ENCODE measurements at regions of chr4 and their contacts with region 1.

Region 1: GRCh38 chr4:125961626-125962025 is 646.9 kb downstream of the FAT4 start:
- DNase-seq: no peak
- ATAC-seq: no peak
- H3K4me3 ChIP-seq: no peak overlapping the region
- H3K27ac ChIP-seq: no peak overlapping the region
- H3K4me1 ChIP-seq: no peaks in the 10 kb centered on the region
- H3K27me3 ChIP-seq: no peaks in the 10 kb centered on the region

Region 2: GRCh38 chr4:124745985-124746801 is 1215.4 kb before region 1 on chr4:
- intact Hi-C with region 1: loop called in 1 of 2 experiments (anchors 10 kb)
- DNase-seq: no peak
- ATAC-seq: peak; percentile 59
- H3K4me3 ChIP-seq: peak overlapping the region; percentile 26 to 34
- H3K27ac ChIP-seq: no peak overlapping the region
- H3K4me1 ChIP-seq: no peaks in the 10 kb centered on the region
- H3K27me3 ChIP-seq: no peaks in the 10 kb centered on the region

Region 3: GRCh38 chr4:126533146-126533805 is 571.6 kb after region 1 on chr4:
- intact Hi-C with region 1: no loop called
- DNase-seq: no peak
- ATAC-seq: no peak
- H3K4me3 ChIP-seq: no peak overlapping the region
- H3K27ac ChIP-seq: no peak overlapping the region
- H3K4me1 ChIP-seq: no peaks in the 10 kb centered on the region
- H3K27me3 ChIP-seq: no peaks in the 10 kb centered on the region